Heart left ventricle (tissue), 16 donors: ENCODE measurements at regions of chr10 and their contacts with region 1.

Region 1: DNA sequence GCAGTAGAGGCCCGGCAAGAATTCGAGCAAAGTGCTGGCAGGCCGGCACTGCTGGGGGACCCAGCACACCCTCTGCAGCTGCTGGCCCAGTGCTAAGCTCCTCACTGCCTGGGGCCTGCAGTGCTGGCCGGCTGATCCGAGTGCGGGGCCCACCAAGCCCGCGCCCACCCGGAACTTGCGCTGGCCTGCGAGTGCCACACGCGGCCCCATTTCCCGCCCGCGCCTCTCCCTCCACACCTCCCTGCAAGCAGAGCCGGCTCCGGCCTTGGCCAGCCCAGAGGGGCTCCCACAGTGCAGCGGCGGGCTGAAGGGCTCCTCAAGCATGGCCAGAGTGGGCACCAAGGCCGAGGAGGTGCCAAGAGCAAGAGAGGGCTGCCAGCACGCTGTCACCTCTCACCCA is 3.1 kb downstream of the DYDC2 start:
- DNase-seq: peak in 1 of 5 donors; percentile 66
- ATAC-seq: peak in 1 of 4 donors; percentile 25
- H3K4me3 ChIP-seq: no peak overlapping the region
- H3K27ac ChIP-seq: no peak overlapping the region
- H3K4me1 ChIP-seq: peaks cover 0 to 13% (median 5%) of the 10 kb centered on the region in 12 donors
- H3K27me3 ChIP-seq: peaks cover 1 to 30% (median 14%) of the 10 kb centered on the region in 9 donors
- CTCF ChIP-seq: no peak
- POLR2A ChIP-seq: no peak

Region 2: DNA sequence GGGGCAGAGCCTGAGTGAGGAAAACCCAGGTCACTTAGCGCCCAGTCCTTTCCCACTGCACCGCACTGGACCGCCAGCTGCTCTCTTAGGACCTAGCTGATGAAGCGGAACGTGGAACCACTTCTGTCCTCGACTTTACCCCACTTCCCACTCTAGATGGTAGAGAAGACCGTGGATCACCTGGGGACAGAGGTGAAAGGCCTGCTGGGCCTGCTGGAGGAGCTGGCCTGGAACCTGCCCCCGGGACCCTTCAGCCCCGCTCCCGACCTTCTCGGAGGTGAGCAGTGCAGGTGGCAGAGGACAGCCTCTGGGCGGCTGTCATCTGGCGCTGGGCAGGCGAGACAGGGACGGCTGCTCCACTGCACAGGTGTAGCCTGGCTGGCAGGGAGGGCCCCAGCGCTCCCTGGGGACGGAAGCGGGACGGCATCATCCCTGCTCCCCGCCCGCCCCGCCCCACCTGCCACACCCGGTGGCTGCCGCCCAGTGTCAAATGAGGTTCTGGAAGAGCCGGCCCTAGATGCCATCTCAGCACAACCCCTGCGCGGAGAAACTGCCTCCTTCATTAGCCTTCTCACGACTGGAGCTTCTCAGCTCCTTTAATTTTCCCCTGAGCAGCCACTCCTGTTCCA is 215.5 kb before region 1 on chr10:
- intact Hi-C with region 1: no loop called
- DNase-seq: no peak
- ATAC-seq: peak; percentile 21 to 58 (median 48)
- H3K4me3 ChIP-seq: peak overlapping the region in 4 of 12 donors; percentile 0 to 31 (median 12)
- H3K27ac ChIP-seq: peak overlapping the region in 3 of 12 donors; percentile 3 to 45 (median 37)
- H3K4me1 ChIP-seq: peaks cover 0 to 31% (median 15%) of the 10 kb centered on the region in 12 donors
- H3K27me3 ChIP-seq: no peaks in the 10 kb centered on the region
- CTCF ChIP-seq: peak in 2 of 12 donors; percentile 4
- POLR2A ChIP-seq: peak in 1 of 2 donors; percentile 12

Region 3: GRCh38 chr10:80642661-80643060 is 283.0 kb after region 1 on chr10:
- intact Hi-C with region 1: loop called in 1 of 10 experiments (anchors 5 kb)
- DNase-seq: no peak
- ATAC-seq: no peak
- H3K4me3 ChIP-seq: no peak overlapping the region
- H3K27ac ChIP-seq: no peak overlapping the region
- H3K4me1 ChIP-seq: no peaks in the 10 kb centered on the region
- H3K27me3 ChIP-seq: peaks cover 0 to 2% (median 0%) of the 10 kb centered on the region in 9 donors
- CTCF ChIP-seq: no peak
- POLR2A ChIP-seq: no peak